ENCODE measurements at regions of chr10 and their contacts with region 1.

Region 1: DNA sequence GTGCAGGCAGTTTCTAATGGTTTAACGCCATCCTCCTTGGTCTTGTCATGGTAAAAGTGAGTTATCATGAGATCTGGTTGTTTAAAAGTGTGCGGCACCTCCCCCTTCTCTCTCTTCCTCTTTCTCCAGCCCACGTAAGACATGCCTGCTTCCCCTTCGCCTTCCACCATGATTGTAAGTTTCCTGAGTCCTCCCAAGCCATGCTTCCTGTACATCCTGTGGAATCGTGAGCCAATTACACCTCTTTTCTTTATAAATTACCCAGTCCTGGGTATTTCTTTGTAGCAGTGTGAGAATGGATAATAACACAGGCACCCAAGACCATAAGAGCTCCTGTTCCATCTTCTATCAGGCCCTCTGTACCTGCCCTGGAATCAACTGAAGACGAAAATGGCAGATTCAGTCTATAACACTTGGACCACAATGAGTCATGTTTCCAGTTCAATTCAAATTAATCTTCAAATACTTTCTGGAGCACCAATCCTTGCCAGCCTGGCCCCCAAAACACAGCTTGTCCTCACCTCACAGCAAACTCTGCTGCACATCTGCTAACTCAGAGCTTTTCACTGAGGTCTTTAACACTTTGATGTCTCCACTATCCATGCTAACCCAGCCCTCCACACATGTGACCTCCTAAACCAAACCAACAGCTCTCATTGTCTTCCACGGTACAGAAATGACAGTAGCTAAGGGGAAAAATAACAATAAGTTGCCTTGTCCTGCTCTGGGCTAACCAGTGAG is 73.2 kb downstream of the SFMBT2 start:
- DNase-seq: no peak
- ATAC-seq: no peak
- H3K4me3 ChIP-seq: no peak overlapping the region
- H3K27ac ChIP-seq: no peak overlapping the region
- H3K4me1 ChIP-seq: peaks cover 10% of the 10 kb centered on the region
- H3K27me3 ChIP-seq: no peaks in the 10 kb centered on the region

Region 2: DNA sequence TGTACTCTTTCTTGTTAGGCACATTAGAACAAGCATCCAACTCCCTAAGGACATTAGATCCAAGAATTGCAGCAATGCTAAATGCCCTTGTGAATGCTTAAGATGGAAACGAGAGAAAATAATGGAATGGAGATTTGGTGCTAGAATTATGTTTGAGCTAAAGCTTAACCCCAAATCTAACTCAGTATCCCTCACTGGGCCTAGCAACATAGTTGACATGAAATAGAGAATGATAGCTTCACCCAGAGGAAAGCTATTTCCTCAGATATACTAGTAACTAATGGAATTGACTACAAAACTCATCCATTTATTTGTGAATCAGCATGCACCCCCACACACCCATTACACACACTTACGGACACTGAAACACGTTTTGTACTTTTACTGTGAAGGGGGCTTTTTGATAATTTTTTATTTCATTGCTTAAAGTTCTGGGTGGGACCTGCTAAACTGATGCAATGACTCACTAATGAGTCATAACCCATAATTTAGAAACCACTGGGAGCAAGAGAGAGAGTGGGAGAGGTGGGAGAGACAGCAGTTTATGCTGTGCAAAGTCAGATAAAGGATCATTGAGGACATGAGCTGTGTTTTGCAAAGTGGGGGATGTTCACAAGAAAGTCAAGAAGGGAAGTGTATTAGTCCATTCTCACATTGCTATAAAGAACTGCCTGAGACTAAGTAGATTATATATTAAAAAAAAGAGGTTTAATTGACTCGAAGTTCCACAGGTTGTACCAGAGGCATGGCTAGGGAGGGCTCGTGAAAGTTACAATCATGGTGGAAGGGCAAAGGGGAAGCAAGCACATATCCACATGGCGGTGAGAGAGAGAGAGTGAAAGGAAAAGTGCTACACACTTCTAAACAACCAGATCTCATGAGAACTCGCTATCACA is 309.4 kb before region 1 on chr10:
- intact Hi-C with region 1: no loop called
- DNase-seq: no peak
- ATAC-seq: no peak
- H3K4me3 ChIP-seq: no peak overlapping the region
- H3K27ac ChIP-seq: no peak overlapping the region
- H3K4me1 ChIP-seq: no peaks in the 10 kb centered on the region
- H3K27me3 ChIP-seq: no peaks in the 10 kb centered on the region

Region 3: DNA sequence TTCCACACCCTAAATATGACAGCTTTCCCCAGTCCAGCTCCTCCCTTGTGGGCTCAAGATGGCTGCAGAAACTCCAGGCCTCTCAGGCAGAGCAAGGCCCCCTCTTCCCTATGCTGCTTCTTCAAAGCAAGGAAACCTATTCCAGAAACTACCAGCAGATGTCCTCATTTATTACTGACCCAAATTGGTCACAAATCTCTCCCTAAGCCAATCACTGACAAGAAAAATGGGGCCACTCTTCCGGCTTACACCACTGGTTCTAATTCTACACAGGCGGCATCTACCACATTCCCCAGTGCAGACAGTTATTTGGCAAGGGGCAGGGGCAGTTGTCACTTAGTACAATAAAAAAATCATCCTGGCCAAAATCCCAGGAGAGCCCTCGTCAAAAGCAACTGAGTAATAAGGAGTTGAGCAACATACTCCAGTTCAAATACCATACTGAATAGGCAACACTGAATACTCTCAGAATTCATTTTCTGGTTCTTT is 77.1 kb before region 1 on chr10:
- intact Hi-C with region 1: loop called in 1 of 4 experiments (anchors 10 kb)
- DNase-seq: peak; percentile 70 to 80 (median 72)
- ATAC-seq: peak; percentile 92 to 95
- H3K4me3 ChIP-seq: no peak overlapping the region
- H3K27ac ChIP-seq: peak overlapping the region; percentile 43
- H3K4me1 ChIP-seq: peaks cover 2% of the 10 kb centered on the region
- H3K27me3 ChIP-seq: no peaks in the 10 kb centered on the region

Region 4: GRCh38 chr10:7285522-7286322 is 51.9 kb before region 1 on chr10:
- intact Hi-C with region 1: no loop called
- DNase-seq: no peak
- ATAC-seq: no peak
- H3K4me3 ChIP-seq: no peak overlapping the region
- H3K27ac ChIP-seq: no peak overlapping the region
- H3K4me1 ChIP-seq: no peaks in the 10 kb centered on the region
- H3K27me3 ChIP-seq: no peaks in the 10 kb centered on the region

Region 5: GRCh38 chr10:7424315-7424714 is 86.7 kb after region 1 on chr10:
- intact Hi-C with region 1: no loop called
- DNase-seq: peak in 1 of 3 donors; percentile 56
- ATAC-seq: no peak
- H3K4me3 ChIP-seq: no peak overlapping the region
- H3K27ac ChIP-seq: no peak overlapping the region
- H3K4me1 ChIP-seq: no peaks in the 10 kb centered on the region
- H3K27me3 ChIP-seq: peaks cover 2% of the 10 kb centered on the region

Measured in right cardiac atrium (tissue), 5 donors.